ENCODE measurements at regions of chr2 and their contacts with region 1.

Region 1: DNA sequence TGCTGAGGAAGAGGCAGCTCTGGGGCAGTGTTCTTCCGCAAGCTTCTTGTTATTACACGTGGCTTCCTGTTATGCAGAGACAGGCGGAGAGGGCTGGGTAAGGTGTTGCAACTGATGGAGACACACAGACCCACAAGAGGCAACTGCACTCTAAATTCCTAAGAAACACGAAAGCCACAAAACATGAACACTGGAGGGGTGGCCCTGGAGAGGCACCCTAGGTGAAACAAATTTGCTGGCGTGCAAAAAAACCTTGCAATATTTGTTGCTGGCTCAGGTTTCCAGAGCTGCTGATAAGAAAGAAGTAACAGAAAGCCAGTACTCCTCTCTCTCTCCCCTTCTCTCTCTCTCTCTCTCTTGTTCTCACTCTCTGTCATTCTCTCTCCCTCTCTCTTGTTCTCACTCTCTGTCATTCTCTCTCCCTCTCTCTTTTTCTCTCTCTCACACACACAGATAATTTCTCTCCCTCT is 31.8 kb downstream of the ARHGAP25 start:
- DNase-seq: peak; percentile 81
- H3K4me3 Mint-ChIP-seq: peak overlapping the region; percentile 76
- H3K27ac Mint-ChIP-seq: peak overlapping the region; percentile 98
- H3K4me1 Mint-ChIP-seq: peaks cover 96% of the 10 kb centered on the region
- H3K27me3 Mint-ChIP-seq: no peaks in the 10 kb centered on the region

Region 2: DNA sequence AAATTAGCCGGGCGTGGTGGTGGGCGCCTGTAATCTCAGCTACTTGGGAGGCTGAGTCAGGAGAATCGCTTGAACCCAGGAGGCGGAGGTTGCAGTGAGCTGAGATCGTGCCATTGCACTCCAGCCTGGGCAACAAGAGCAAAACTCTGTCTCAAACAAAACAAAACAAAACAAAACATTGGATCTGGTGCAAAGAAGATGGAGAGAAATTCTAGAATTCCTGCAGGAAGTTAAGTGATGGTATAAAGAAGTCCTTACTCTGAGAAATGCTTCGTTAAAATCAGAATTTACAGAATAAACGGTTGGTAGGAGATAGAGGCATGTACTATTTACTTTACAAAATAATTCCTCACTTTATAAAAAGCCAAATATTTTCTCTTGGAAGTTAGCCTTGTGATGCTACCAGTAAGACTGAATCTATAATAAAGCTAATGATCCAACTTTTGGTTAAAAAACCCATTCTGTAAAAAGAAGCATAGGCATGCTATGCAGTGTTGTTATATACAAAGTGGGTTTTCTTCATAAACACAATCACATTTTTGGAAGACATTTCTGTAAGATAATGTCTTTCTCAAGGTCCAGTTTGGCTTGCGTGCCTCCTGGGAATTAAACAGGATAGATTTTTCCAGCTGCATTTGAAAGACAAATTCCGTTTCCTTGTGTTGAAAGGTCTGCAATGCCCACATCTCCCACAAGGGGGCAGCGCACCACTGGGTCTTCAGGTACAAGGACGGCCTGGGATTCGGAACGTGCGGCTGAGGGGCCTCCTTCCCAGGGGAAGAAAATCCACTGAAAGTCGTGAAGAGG is 644.3 kb before region 1 on chr2:
- CTCF ChIA-PET with region 1: no interaction called
- POLR2A ChIA-PET with region 1: no interaction called
- intact Hi-C with region 1: no loop called
- DNase-seq: peak; percentile 82
- H3K4me3 Mint-ChIP-seq: no peak overlapping the region
- H3K27ac Mint-ChIP-seq: no peak overlapping the region
- H3K4me1 Mint-ChIP-seq: no peaks in the 10 kb centered on the region
- H3K27me3 Mint-ChIP-seq: no peaks in the 10 kb centered on the region

Region 3: GRCh38 chr2:68316111-68316510 is 450.3 kb before region 1 on chr2:
- CTCF ChIA-PET with region 1: no interaction called
- POLR2A ChIA-PET with region 1: no interaction called
- intact Hi-C with region 1: no loop called
- DNase-seq: no peak
- H3K4me3 Mint-ChIP-seq: no peak overlapping the region
- H3K27ac Mint-ChIP-seq: no peak overlapping the region
- H3K4me1 Mint-ChIP-seq: peaks cover 2% of the 10 kb centered on the region
- H3K27me3 Mint-ChIP-seq: peaks cover 38% of the 10 kb centered on the region

Region 4: DNA sequence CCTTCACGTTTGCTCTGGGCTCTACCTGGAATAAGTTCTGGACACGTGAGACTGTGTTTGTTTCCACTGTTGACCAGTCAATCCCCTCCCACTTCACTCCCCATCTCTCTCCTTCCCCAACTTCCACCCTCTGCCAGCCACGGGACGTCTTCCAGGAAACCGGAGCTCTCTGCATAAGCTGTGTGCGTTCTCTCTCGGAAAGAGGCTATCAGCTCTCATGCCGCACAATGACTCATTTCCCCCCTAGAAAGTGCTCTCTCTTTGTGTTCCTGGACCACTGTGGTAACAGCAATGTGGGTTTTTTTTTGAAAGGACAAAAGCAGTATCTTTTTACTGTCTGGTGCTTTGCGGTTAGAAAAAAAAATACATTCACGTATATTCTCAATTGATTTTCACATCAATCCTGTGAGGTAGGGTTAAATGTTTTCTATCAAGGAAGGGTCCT is 112.9 kb before region 1 on chr2:
- CTCF ChIA-PET with region 1: no interaction called
- POLR2A ChIA-PET with region 1: no interaction called
- intact Hi-C with region 1: loop called (anchors 5 kb)
- DNase-seq: peak; percentile 71
- H3K4me3 Mint-ChIP-seq: no peak overlapping the region
- H3K27ac Mint-ChIP-seq: peak overlapping the region; percentile 20
- H3K4me1 Mint-ChIP-seq: peaks cover 34% of the 10 kb centered on the region
- H3K27me3 Mint-ChIP-seq: peaks cover 20% of the 10 kb centered on the region

Region 5: GRCh38 chr2:68734688-68735525 is 31.5 kb before region 1 on chr2 and contains the start of gene ARHGAP25:
- CTCF ChIA-PET with region 1: interaction called, 11 read pairs
- POLR2A ChIA-PET with region 1: interaction called, 47 read pairs
- intact Hi-C with region 1: loop called (anchors 1 kb)
- DNase-seq: peak; percentile 87
- H3K4me3 Mint-ChIP-seq: no peak within 1 kb of the TSS
- H3K27ac Mint-ChIP-seq: no peak within 1 kb of the TSS
- H3K4me1 Mint-ChIP-seq: peaks cover 36% of the 10 kb centered on the region
- H3K27me3 Mint-ChIP-seq: no peaks in the 10 kb centered on the region
- total RNA-seq, gene ARHGAP25: 79.8 to 87.7 TPM

Region 6: DNA sequence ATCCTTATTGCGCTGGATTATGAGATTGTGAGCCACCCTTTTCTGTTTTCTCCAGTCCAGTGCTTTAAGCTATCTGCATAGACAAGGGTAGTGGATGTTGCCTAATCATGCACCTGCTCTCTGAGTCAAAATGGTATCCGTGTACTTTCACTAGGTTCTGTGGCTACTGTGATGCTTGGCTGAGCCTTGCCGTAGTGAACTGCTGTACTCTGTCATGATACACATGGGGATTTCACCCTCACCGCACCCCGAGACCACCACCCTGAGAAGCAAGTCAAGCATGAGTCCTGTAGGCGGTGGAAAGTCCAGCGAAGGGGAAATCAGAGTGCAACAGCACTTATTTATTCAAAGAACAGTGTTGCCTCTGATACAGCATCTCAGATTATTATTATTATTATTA is 23.2 kb after region 1 on chr2:
- CTCF ChIA-PET with region 1: interaction called, 4 read pairs
- POLR2A ChIA-PET with region 1: interaction called, 3 read pairs
- intact Hi-C with region 1: loop called (anchors 1 kb)
- DNase-seq: peak; percentile 83
- H3K4me3 Mint-ChIP-seq: no peak overlapping the region
- H3K27ac Mint-ChIP-seq: peak overlapping the region; percentile 25
- H3K4me1 Mint-ChIP-seq: peaks cover 53% of the 10 kb centered on the region
- H3K27me3 Mint-ChIP-seq: no peaks in the 10 kb centered on the region

Region 7: GRCh38 chr2:68828887-68829708 is 62.7 kb after region 1 on chr2:
- CTCF ChIA-PET with region 1: no interaction called
- POLR2A ChIA-PET with region 1: no interaction called
- intact Hi-C with region 1: loop called (anchors 1 kb)
- DNase-seq: peak; percentile 86
- H3K4me3 Mint-ChIP-seq: peak overlapping the region; percentile 21
- H3K27ac Mint-ChIP-seq: peak overlapping the region; percentile 79
- H3K4me1 Mint-ChIP-seq: peaks cover 64% of the 10 kb centered on the region
- H3K27me3 Mint-ChIP-seq: no peaks in the 10 kb centered on the region

Region 8: GRCh38 chr2:70570041-70570663 is 1803.7 kb after region 1 on chr2:
- CTCF ChIA-PET with region 1: no interaction called
- POLR2A ChIA-PET with region 1: no interaction called
- intact Hi-C with region 1: no loop called
- DNase-seq: no peak
- H3K4me3 Mint-ChIP-seq: no peak overlapping the region
- H3K27ac Mint-ChIP-seq: no peak overlapping the region
- H3K4me1 Mint-ChIP-seq: peaks cover 2% of the 10 kb centered on the region
- H3K27me3 Mint-ChIP-seq: peaks cover 16% of the 10 kb centered on the region